Left lung (tissue), 14 donors: ENCODE measurements at regions of chr3 and their contacts with region 1.

Region 1: DNA sequence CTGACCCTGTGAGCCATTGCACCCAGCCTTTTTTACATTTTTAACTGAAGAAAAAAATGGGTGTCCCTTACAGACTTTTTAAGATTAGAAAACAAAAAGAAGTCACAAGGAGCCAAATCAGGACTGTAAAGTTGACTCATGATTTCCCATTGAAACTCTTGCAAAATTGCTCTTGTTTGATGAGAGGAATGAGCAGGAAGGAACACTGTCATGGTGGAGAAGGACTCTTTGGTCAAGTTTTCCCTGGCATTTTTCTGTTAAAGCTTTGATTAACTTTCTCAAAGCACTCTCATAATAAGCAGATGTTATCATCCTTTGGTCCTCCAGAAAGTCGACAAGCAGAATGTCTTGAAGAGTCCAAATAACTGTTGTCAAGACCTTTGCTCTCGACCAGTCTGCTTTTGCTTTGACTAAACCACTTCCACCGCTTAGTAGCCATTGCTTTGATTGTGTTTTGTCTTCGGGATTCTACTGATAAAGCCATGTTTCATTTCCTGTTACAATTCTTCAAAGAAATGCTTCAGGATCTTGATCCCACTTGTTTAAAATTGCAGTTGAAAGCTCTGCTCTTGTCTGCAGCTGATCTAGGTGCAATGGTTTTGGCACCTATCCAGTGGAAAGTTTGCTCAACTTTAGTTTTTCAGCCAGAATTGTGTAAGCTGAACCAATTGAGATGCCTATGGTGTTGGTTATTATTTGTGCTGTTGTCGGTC is 369.4 kb downstream of the MAGI1 start:
- DNase-seq: peak in 1 of 4 donors; percentile 24
- ATAC-seq: peak; percentile 50
- H3K4me3 ChIP-seq: no peak overlapping the region
- H3K27ac ChIP-seq: no peak overlapping the region
- H3K4me1 ChIP-seq: no peaks in the 10 kb centered on the region
- H3K27me3 ChIP-seq: no peaks in the 10 kb centered on the region
- CTCF ChIP-seq: no peak

Region 2: DNA sequence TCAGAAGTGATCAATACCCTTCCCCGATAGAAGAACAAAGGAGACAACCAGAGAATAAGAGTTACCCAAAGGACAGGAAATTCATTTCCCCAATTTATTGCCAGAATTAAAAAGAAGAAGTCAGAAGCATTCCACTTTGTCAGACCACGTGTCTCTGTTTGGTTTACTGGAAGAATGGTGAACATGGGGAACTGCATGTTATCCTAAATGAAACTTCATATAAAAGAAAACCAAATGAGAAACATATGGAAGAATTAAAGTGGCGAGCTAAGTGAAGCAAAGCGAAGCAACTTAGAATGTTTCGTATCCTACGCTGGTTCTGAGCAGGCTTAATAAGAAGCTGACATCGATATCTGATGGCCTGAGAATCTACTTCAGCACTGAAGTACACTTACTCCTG is 178.7 kb after region 1 on chr3:
- intact Hi-C with region 1: no loop called
- DNase-seq: no peak
- ATAC-seq: no peak
- H3K4me3 ChIP-seq: no peak overlapping the region
- H3K27ac ChIP-seq: no peak overlapping the region
- H3K4me1 ChIP-seq: no peaks in the 10 kb centered on the region
- H3K27me3 ChIP-seq: no peaks in the 10 kb centered on the region
- CTCF ChIP-seq: no peak

Region 3: DNA sequence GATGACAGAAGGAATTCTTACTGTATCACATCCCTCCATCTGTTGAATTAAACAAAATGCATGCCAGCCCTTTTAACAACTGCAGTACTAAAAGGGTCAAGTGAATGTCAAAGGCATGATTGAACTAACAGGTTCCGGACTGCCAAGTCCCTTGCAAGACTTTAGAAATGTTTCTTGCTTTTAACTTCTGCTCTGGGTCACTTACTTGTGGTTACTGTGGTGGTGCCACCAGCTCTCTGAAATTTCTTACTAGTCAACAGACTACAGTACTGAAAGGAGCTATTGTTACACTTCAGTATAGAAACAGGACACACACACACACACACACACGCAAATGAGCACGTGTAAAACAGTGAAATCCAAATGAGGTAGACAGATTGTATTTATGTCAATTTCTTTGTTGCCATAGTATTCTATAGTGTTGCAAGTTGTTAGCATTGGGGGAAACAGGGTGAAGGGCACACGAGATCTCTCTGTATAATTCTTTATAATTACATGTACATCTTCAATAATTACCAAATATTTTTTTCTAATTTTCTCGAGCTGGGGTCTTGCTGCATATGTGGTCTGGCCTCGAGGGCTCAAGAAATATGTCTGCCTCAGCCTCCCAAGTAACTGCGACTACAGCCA is 471.5 kb after region 1 on chr3:
- intact Hi-C with region 1: loop called in 1 of 2 experiments (anchors 10 kb)
- DNase-seq: no peak
- ATAC-seq: no peak
- H3K4me3 ChIP-seq: no peak overlapping the region
- H3K27ac ChIP-seq: no peak overlapping the region
- H3K4me1 ChIP-seq: no peaks in the 10 kb centered on the region
- H3K27me3 ChIP-seq: no peaks in the 10 kb centered on the region
- CTCF ChIP-seq: no peak